WTC11 (cell line): ENCODE measurements at regions of chrX and their contacts with region 1.

Region 1: GRCh38 chrX:56281789-56282188 is 49.6 kb downstream of the KLF8 start:
- DNase-seq: no peak
- ATAC-seq: no peak
- H3K4me3 Mint-ChIP-seq: no peak overlapping the region
- H3K27ac Mint-ChIP-seq: no peak overlapping the region
- H3K4me1 Mint-ChIP-seq: no peaks in the 10 kb centered on the region
- H3K27me3 Mint-ChIP-seq: no peaks in the 10 kb centered on the region
- CTCF ChIP-seq: no peak

Region 2: DNA sequence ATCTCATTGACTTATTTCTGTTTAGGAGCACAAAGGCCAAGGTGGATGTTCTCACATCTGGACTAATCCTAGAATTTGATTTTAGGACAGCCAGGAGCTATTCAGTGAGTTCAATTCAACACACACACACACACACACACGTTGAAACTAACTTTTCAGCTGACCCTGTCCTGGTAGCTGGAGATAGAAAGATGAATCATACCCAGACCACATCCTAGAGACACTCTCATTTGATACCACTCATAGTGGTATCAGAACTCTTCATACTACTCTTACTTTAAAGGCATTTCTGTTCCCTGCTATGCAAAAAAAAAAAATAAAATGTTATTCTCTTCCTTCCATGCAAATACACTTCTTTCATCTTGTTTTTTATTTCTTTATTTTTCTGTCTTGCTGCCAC is 12.9 kb before region 1 on chrX:
- CTCF ChIA-PET with region 1: no interaction called
- POLR2A ChIA-PET with region 1: no interaction called
- DNase-seq: no peak
- ATAC-seq: no peak
- H3K4me3 Mint-ChIP-seq: no peak overlapping the region
- H3K27ac Mint-ChIP-seq: no peak overlapping the region
- H3K4me1 Mint-ChIP-seq: no peaks in the 10 kb centered on the region
- H3K27me3 Mint-ChIP-seq: no peaks in the 10 kb centered on the region
- CTCF ChIP-seq: no peak

Region 3: DNA sequence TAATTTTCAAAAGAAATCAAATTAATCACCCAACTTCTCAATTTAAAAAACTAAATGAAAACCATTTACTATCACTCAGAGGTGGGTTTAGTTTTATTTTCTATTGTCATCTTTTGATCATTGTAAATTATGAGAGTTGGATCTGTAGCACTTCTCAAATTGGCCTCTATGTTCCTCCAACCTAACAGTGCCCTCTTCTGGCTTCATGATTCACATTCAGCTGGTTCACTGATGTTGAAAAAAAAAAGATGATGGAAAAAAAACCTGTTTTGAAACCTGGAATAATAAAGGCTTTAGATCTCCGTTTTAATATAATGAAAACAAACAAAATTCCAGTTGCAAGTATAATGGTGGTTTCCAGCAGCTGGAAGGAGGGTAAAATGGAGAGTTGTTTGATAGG is 444.8 kb after region 1 on chrX:
- CTCF ChIA-PET with region 1: interaction called, 16 read pairs
- POLR2A ChIA-PET with region 1: no interaction called
- DNase-seq: no peak
- ATAC-seq: no peak
- H3K4me3 Mint-ChIP-seq: no peak overlapping the region
- H3K27ac Mint-ChIP-seq: no peak overlapping the region
- H3K4me1 Mint-ChIP-seq: peaks cover 9% of the 10 kb centered on the region; the same call in 1 of the 2 replicates
- H3K27me3 Mint-ChIP-seq: no peaks in the 10 kb centered on the region
- CTCF ChIP-seq: no peak